Psoas muscle (tissue), 8 donors: ENCODE measurements at regions of chrX and their contacts with region 1.

Region 1: DNA sequence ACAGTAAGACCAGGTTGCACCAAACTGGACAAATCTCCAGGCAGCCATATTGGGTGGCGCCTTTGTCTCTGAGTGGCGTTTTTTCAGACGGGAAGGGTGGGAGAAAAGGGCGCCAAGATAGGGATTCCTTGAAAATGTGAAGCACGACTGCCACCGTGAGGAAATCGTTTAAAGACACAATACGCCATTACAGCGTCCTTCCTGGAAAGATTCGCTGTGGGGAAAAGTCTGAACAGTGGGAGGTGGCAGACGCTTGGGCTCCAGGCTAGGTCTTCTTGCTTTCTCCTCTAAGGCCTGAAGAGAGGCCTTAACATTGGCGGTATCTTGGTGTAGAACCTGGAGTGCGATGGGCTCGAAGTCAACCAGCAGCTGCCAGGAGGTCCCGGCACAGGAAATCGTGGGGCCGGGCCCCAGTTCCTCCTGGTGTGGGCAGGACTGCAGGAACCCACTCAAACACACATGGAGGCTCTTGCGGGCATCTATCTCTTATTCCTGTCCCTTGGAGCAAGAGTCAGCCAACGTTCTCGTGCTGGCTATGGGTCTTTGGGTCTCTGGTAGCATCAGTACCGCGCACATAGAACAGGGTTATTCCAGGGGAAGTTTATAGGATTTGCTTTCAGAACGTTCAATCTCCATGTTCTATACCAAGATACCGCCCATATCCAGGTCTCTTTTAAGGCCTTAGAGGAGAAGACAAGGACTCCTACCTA is 208.8 kb downstream of the OR13H1 start:
- DNase-seq: peak; percentile 67 to 83
- ATAC-seq: peak; percentile 82 to 89 (median 88)
- H3K4me3 ChIP-seq: peak overlapping the region; percentile 71
- H3K27ac ChIP-seq: peak overlapping the region; percentile 83
- H3K4me1 ChIP-seq: no peaks in the 10 kb centered on the region
- H3K27me3 ChIP-seq: no peaks in the 10 kb centered on the region
- CTCF ChIP-seq: peak; percentile 41

Region 2: GRCh38 chrX:131792789-131793462 is 40.3 kb after region 1 on chrX:
- intact Hi-C with region 1: loop called in 1 of 2 experiments (anchors 5 kb)
- DNase-seq: peak; percentile 82 to 87
- ATAC-seq: peak; percentile 86 to 91 (median 88)
- H3K4me3 ChIP-seq: peak overlapping the region; percentile 65
- H3K27ac ChIP-seq: peak overlapping the region; percentile 87
- H3K4me1 ChIP-seq: no peaks in the 10 kb centered on the region
- H3K27me3 ChIP-seq: no peaks in the 10 kb centered on the region
- CTCF ChIP-seq: peak; percentile 53